Activated naive CD4-positive, alpha-beta T cell treated with anti-CD3 and anti-CD28 coated beads for 36 hours (primary cell): ENCODE measurements at regions of chr12 and their contacts with region 1.

Region 1: GRCh38 chr12:106955377-106956047 is at the start of gene TMEM263:
- DNase-seq: peak; percentile 87
- H3K4me3 Mint-ChIP-seq: peak within 1 kb of the TSS; percentile 99
- H3K27ac Mint-ChIP-seq: peak within 1 kb of the TSS; percentile 91
- H3K4me1 Mint-ChIP-seq: peaks cover 14% of the 10 kb centered on the region
- H3K27me3 Mint-ChIP-seq: no peaks in the 10 kb centered on the region
- total RNA-seq, gene TMEM263: 29.1 to 30.4 TPM

Region 2: GRCh38 chr12:106302401-106303201 is 652.9 kb before region 1 on chr12 and contains the start of gene TCP11L2:
- CTCF ChIA-PET with region 1: no interaction called
- intact Hi-C with region 1: loop called (anchors 5 kb)
- DNase-seq: peak; percentile 88
- H3K4me3 Mint-ChIP-seq: peak within 1 kb of the TSS; percentile 93
- H3K27ac Mint-ChIP-seq: peak within 1 kb of the TSS; percentile 99
- H3K4me1 Mint-ChIP-seq: peaks cover 55% of the 10 kb centered on the region
- H3K27me3 Mint-ChIP-seq: no peaks in the 10 kb centered on the region
- total RNA-seq, gene TCP11L2: 9.2 to 10.3 TPM

Region 3: GRCh38 chr12:106357549-106358395 is 597.7 kb before region 1 on chr12 and contains the start of gene POLR3B:
- CTCF ChIA-PET with region 1: no interaction called
- intact Hi-C with region 1: loop called (anchors 1 kb)
- DNase-seq: peak; percentile 97
- H3K4me3 Mint-ChIP-seq: peak within 1 kb of the TSS; percentile 92
- H3K27ac Mint-ChIP-seq: peak within 1 kb of the TSS; percentile 89
- H3K4me1 Mint-ChIP-seq: peaks cover 11% of the 10 kb centered on the region
- H3K27me3 Mint-ChIP-seq: no peaks in the 10 kb centered on the region
- total RNA-seq, gene POLR3B: 6.4 to 6.8 TPM

Region 4: DNA sequence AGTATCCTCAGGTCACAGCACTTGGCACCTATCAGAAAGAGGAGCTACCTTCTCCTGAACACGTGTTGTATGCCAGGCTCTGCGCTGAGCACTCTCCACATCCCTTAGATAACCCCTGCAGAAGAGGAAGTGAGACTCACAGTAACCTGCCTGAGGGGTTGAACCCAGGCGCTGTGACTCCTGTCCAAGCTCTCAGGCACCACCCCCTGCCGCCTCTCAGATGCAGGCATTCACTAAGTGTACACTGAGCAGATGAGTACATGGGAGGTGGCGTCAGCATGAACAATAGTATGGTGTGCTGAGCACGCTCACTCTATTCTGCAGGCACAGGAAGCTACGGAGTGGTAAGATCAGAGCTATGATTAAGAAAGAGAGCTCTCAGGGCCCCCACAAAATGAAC is 202.0 kb before region 1 on chr12:
- CTCF ChIA-PET with region 1: no interaction called
- intact Hi-C with region 1: loop called (anchors 2 kb)
- DNase-seq: peak; percentile 90
- H3K4me3 Mint-ChIP-seq: peak overlapping the region; percentile 46
- H3K27ac Mint-ChIP-seq: peak overlapping the region; percentile 68
- H3K4me1 Mint-ChIP-seq: peaks cover 30% of the 10 kb centered on the region
- H3K27me3 Mint-ChIP-seq: no peaks in the 10 kb centered on the region

Region 5: GRCh38 chr12:106878804-106879203 is 76.7 kb before region 1 on chr12:
- CTCF ChIA-PET with region 1: no interaction called
- intact Hi-C with region 1: no loop called
- DNase-seq: no peak
- H3K4me3 Mint-ChIP-seq: no peak overlapping the region
- H3K27ac Mint-ChIP-seq: no peak overlapping the region
- H3K4me1 Mint-ChIP-seq: no peaks in the 10 kb centered on the region
- H3K27me3 Mint-ChIP-seq: no peaks in the 10 kb centered on the region

Region 6: DNA sequence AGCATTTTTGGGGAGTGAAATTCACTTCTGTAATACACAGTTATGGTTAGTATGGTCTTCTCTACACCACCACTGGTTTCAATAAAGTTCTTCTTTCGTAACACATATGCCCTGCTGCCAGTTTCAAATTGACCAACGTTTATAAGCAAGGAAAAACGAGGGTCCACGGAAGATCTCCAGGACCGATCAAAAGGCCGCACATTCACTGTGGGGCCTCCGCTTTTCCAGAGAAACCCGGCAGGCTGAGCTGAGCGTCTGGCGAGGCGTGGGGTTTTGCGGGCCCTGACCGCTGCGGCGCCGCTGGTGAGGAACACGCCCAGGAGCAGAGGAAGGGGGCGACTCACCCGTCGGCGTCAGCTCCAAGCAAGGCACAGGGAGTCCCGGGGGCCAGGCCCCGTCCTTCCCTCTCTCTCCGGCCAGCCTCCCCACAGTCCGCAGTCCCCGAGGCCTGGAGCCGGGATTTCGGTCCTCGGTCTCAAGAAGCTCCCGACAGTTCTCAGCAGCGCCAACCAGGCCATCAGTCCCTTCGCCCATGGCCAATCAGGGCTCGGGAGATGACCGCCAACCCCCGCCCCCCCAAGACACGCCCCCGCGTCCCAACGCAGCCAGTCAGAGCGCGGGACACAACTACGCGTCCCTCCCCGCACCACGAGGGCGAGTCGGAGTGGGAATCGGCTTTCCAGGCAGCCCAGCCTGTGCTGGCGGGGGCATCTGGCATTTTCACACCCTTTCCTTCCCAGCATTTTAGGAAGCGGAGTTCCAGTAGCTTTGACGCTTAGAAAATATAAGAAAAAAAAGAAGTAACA is 31.3 kb after region 1 on chr12 and contains the start of gene MTERF2:
- CTCF ChIA-PET with region 1: no interaction called
- intact Hi-C with region 1: loop called (anchors 1 kb)
- DNase-seq: peak; percentile 88
- H3K4me3 Mint-ChIP-seq: peak within 1 kb of the TSS; percentile 90
- H3K27ac Mint-ChIP-seq: peak within 1 kb of the TSS; percentile 70
- H3K4me1 Mint-ChIP-seq: peaks cover 36% of the 10 kb centered on the region
- H3K27me3 Mint-ChIP-seq: no peaks in the 10 kb centered on the region
- total RNA-seq, gene MTERF2: 5.2 to 6.5 TPM

Region 7: GRCh38 chr12:107014028-107014427 is 58.5 kb after region 1 on chr12:
- CTCF ChIA-PET with region 1: no interaction called
- intact Hi-C with region 1: no loop called
- DNase-seq: no peak
- H3K4me3 Mint-ChIP-seq: no peak overlapping the region
- H3K27ac Mint-ChIP-seq: no peak overlapping the region
- H3K4me1 Mint-ChIP-seq: no peaks in the 10 kb centered on the region
- H3K27me3 Mint-ChIP-seq: no peaks in the 10 kb centered on the region

Region 8: DNA sequence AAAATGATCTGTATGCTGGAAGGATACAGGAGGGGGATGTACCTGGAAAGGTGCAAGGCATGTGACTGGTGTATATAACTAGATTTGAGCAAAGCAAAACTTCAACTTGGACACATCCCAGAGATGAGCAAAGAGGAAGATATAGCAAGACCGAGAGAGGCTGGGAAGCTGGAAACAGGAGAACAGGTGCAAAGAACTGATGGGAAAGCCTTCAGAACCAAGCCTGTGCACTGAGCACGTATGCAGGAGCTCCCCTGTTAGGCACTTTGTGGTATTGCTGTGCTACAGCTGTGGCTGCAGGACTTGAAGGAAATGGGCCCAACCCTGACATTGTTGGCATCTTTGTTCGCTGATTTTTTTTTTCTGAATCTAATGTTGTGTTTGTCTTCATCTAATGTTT is 609.4 kb after region 1 on chr12:
- CTCF ChIA-PET with region 1: no interaction called
- intact Hi-C with region 1: no loop called
- DNase-seq: peak; percentile 33
- H3K4me3 Mint-ChIP-seq: no peak overlapping the region
- H3K27ac Mint-ChIP-seq: no peak overlapping the region
- H3K4me1 Mint-ChIP-seq: no peaks in the 10 kb centered on the region
- H3K27me3 Mint-ChIP-seq: no peaks in the 10 kb centered on the region

Region 9: GRCh38 chr12:107685360-107686248 is 730.1 kb after region 1 on chr12 and contains the start of gene PWP1:
- CTCF ChIA-PET with region 1: no interaction called
- intact Hi-C with region 1: loop called (anchors 2 kb)
- DNase-seq: peak; percentile 95
- H3K4me3 Mint-ChIP-seq: peak within 1 kb of the TSS; percentile 90
- H3K27ac Mint-ChIP-seq: peak within 1 kb of the TSS; percentile 95
- H3K4me1 Mint-ChIP-seq: peaks cover 20% of the 10 kb centered on the region
- H3K27me3 Mint-ChIP-seq: no peaks in the 10 kb centered on the region
- total RNA-seq, gene PWP1: 35.0 to 37.1 TPM